Dorsolateral prefrontal cortex (tissue), 120 donors: ENCODE measurements at regions of chr22 and their contacts with region 1.

Region 1: DNA sequence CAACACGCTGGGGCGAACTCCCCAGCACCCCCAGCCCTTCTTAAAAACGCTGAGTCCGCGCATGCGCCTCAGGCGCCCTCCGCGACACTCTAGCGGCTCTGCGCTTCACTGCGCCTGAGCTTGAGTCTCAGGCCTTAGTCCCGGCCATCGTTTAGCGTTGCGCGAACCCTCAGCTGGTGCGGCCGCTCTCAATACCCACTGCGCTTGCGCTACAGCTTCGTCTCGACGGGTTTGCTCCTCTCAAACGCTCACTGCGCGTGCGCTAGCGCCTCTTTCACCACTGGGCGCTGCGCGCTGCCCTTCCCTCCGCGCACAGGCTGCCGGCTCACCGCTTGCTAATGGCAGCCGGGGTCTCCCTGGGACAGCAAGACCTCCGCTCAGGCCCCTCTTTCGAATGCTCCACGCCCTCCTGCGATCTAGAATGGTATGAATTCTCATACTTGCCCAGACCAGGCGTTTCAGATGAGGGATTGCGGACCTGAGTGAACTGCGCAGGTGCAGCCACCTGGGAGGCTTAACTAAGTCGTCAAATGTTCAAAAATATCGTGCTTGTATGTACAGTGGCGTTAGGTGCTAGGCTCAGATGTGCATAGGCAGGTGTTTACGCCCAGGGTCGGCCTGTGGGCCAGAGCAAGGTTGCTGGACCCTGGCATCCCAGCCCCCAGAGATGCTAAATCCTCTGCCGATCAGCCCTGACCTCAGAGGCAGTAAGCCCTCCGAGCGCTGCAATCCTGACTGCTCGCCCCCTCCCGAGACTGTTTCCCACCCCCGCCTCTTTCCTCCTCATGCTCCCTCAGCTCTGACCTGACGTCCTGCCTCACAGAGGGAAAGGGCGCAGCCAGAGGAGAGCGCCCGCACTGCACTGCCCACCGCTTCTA is at the start of gene SLC2A11:
- DNase-seq: peak; percentile 91 to 97 (median 94)
- H3K4me3 ChIP-seq: peak within 1 kb of the TSS; percentile 57 to 100 (median 85)
- H3K27ac ChIP-seq: peak within 1 kb of the TSS; percentile 46 to 99 (median 96)
- H3K27me3 ChIP-seq: no peaks in the 10 kb centered on the region
- CTCF ChIP-seq: peak in 48 of 56 donors; percentile 3 to 68 (median 40)
- total RNA-seq, gene SLC2A11: 25.3 to 69.8 (median 42.4) TPM

Region 2: GRCh38 chr22:23716811-23717801 is 140.7 kb before region 1 on chr22:
- intact Hi-C with region 1: loop called in 1 of 2 experiments (anchors 5 kb)
- DNase-seq: peak; percentile 83 to 93 (median 88)
- H3K4me3 ChIP-seq: peak overlapping the region; percentile 63 to 100 (median 95)
- H3K27ac ChIP-seq: peak overlapping the region in 57 of 59 donors; percentile 17 to 88 (median 73)
- H3K27me3 ChIP-seq: no peaks in the 10 kb centered on the region
- CTCF ChIP-seq: peak in 21 of 56 donors; percentile 6 to 45 (median 17)

Region 3: GRCh38 chr22:23786752-23787599 is 70.9 kb before region 1 on chr22 and contains the start of gene SMARCB1:
- intact Hi-C with region 1: no loop called
- DNase-seq: peak; percentile 77 to 90 (median 86)
- H3K4me3 ChIP-seq: peak within 1 kb of the TSS; percentile 63 to 100 (median 91)
- H3K27ac ChIP-seq: peak within 1 kb of the TSS; percentile 88 to 100 (median 99)
- H3K27me3 ChIP-seq: no peaks in the 10 kb centered on the region
- CTCF ChIP-seq: peak in 15 of 56 donors; percentile 3 to 34 (median 11)
- total RNA-seq, gene SMARCB1: 60.2 to 91.8 (median 72.1) TPM

Region 4: GRCh38 chr22:23893943-23894709 is 36.3 kb after region 1 on chr22 and contains the start of gene MIF:
- intact Hi-C with region 1: loop called (anchors 5 kb)
- DNase-seq: peak; percentile 94 to 98 (median 96)
- H3K4me3 ChIP-seq: peak within 1 kb of the TSS; percentile 59 to 92 (median 82)
- H3K27ac ChIP-seq: peak within 1 kb of the TSS; percentile 74 to 99 (median 97)
- H3K27me3 ChIP-seq: no peaks in the 10 kb centered on the region
- CTCF ChIP-seq: peak; percentile 51 to 87 (median 77)
- total RNA-seq, gene MIF: 175 to 552 (median 413) TPM

Region 5: DNA sequence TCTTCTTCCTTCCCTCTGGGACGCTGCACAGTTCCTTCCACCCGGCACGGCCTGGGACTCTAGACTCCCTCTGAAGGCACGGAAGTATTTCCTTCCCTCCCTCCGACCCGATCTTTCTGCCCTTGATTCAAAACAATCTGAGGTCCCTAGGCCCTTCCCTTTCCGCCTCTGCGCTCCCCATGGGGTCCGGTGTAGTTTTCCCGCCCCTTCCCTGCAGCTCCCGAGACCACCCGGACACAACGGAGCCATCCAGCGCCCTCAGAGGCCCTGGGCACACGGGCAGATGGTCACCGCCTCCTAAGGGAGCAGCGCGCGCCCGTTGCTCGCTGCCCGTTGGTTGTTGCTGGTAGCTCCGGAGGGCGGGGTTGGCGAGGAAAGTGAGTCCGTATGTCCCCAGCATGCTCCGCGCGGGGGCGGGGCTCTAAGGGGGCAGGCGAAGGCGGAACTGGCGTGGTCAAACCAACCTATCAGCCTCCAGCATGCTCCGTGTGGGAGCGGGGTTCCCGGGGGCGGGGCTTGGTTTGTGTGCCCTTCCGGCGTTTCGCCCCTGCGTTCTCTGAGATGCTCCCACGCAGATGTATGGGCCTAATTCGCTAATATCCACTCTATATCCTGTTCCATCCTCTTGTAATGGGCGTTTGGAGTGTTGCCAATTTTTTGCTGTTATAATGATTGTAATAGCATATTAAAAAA is 56.0 kb after region 1 on chr22:
- intact Hi-C with region 1: loop called in 1 of 2 experiments (anchors 5 kb)
- DNase-seq: peak; percentile 99 to 100 (median 99)
- H3K4me3 ChIP-seq: peak overlapping the region; percentile 44 to 86 (median 70)
- H3K27ac ChIP-seq: peak overlapping the region; percentile 3 to 96 (median 89)
- H3K27me3 ChIP-seq: no peaks in the 10 kb centered on the region
- CTCF ChIP-seq: peak in 34 of 56 donors; percentile 3 to 57 (median 34)